GM10248 (cell line): ENCODE measurements at regions of chr6 and their contacts with region 1.

Region 1: GRCh38 chr6:30396833-30397479 is 52.0 kb downstream of the RPP21 start:
- DNase-seq: peak; percentile 90
- CTCF ChIP-seq: peak; percentile 90

Region 2: DNA sequence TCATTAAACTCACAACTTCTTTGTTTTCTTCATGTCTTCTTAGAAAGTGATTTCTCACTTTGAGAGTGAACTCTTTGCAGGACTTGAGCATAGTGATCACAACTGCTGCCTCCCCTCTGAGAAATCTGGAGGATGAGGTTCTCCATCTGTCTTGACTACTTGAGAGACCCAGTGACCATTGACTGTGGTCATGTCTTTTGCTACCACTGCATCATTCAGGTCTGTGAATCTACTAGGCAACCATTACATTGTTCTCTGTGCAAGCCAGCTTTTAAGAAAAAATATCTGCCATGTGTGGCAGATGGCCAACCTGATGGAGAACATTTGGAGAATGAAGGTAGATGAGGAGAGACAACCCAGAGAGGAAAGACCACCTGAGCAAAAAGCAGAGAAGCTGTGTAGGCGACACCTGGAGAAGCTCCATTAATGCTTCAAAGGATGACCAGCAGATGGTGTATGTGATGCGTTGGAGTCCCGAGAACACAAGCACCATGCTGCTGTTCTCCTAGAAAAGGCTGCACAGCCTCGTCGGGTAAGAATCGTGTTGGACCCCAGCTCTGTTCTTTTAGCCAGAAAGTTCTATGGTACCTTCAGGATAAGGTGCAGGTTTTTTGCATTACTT is 158.7 kb before region 1 on chr6:
- CTCF ChIA-PET with region 1: interaction called, 28 read pairs
- POLR2A ChIA-PET with region 1: no interaction called
- DNase-seq: peak; percentile 49
- CTCF ChIP-seq: peak; percentile 67

Region 3: GRCh38 chr6:30357678-30358540 is 39.0 kb before region 1 on chr6:
- CTCF ChIA-PET with region 1: interaction called, 29 read pairs
- POLR2A ChIA-PET with region 1: no interaction called
- DNase-seq: peak; percentile 73
- CTCF ChIP-seq: peak; percentile 64

Region 4: DNA sequence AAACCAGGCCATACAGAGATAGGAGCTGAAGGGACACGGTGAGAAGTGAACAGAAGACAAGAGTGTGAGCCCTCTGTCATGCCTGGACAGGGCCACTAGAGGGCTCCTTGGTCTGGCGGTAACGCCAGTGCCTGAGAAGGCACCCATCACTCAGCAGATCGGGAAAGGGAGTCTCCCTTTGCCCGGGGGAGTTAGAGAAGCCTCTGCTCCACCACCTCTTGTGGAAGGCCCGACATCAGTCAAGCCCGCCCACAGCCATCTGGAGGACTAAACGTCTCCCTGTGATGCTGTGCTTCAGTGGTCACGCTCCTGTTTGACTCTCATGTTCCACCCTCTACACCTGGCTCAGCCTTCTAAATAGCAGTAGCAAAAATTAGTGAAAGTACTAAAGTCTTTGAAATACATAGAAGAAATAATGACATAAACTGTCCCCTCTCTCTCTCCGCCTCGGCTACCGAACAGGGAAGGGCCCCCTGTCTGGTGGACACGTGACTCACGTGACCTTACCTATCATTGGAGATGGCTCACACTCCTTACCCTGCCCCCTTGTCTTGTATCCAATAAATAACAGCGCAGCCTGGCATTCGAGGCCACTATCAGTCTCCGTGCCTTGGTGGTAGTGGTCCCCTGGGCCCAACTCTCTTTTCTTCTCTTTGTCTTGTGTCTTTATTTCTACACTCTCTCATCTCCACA is 14.7 kb after region 1 on chr6:
- CTCF ChIA-PET with region 1: interaction called, 17 read pairs
- POLR2A ChIA-PET with region 1: no interaction called
- DNase-seq: no peak
- CTCF ChIP-seq: peak; percentile 77

Region 5: DNA sequence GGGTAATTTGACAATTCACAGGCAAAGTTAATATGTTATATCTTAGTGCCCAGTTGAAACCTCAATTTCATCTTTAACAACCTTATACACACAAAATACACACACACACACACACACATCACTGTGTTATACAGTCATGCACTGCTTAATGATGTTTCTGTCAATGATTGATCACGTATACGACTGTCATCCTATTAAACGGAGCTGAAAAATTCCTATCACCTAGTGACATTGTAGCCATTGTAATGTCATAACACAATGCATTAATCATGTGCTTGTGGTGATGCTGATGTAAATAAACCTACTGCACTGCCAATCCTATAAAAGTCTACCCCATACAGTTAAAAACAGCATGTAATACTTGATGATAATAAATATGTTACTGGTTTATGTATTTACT is 27.6 kb after region 1 on chr6:
- CTCF ChIA-PET with region 1: no interaction called
- POLR2A ChIA-PET with region 1: no interaction called
- DNase-seq: no peak
- CTCF ChIP-seq: no peak

Region 6: DNA sequence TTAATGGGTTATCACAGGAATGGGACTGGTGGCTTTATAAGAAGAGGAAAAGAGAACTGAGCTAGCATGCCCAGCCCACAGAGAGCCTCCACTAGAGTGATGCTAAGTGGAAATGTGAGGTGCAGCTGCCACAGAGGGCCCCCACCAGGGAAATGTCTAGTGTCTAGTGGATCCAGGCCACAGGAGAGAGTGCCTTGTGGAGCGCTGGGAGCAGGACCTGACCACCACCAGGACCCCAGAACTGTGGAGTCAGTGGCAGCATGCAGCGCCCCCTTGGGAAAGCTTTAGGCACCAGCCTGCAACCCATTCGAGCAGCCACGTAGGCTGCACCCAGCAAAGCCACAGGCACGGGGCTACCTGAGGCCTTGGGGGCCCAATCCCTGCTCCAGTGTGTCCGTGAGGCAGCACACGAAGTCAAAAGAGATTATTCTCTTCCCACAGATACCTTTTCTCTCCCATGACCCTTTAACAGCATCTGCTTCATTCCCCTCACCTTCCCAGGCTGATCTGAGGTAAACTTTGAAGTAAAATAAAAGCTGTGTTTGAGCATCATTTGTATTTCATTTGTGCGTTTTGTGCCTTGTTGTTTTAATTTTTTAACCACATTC is 96.8 kb after region 1 on chr6:
- CTCF ChIA-PET with region 1: no interaction called
- POLR2A ChIA-PET with region 1: no interaction called
- DNase-seq: no peak
- CTCF ChIP-seq: peak; percentile 39

Region 7: DNA sequence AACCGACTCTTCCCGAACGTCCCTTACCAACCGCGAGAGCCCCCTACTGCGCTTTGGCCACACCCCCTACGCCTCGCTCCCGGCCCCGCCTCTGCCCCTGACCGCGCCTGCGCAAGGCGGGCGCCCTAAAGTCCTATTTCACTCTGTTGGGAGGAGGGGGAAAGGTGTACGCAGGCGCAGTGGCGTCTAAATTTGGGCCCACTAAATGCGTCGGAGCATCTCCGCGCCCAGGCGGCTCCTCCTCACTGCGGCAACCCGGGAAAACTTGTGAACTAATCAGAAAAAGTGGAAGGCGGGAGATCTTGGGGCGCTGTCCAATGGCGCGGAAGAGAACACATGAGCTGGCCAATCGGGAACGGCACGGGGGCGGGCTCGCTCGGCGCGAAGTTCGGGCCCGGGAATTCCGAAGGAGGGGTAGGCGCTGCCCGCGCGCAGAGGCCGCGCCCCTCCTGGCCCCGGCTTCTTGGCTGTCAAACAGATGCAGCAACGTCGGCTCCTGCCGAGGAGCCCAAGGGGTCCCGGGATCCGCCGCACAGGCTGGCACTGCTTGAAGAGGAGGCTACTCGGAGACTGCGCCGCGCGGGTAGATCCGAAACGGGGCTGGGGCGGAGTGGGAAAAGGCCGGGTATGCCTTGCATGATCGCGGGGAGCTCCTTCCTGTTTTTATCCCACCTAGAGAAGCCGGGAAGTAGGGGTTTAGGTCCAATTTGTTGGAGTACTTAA is 761.3 kb after region 1 on chr6 and contains the start of gene TCF19:
- CTCF ChIA-PET with region 1: no interaction called
- POLR2A ChIA-PET with region 1: no interaction called
- DNase-seq: peak; percentile 100
- CTCF ChIP-seq: no peak